ENCODE measurements at regions of chr22 and their contacts with region 1.

Region 1: DNA sequence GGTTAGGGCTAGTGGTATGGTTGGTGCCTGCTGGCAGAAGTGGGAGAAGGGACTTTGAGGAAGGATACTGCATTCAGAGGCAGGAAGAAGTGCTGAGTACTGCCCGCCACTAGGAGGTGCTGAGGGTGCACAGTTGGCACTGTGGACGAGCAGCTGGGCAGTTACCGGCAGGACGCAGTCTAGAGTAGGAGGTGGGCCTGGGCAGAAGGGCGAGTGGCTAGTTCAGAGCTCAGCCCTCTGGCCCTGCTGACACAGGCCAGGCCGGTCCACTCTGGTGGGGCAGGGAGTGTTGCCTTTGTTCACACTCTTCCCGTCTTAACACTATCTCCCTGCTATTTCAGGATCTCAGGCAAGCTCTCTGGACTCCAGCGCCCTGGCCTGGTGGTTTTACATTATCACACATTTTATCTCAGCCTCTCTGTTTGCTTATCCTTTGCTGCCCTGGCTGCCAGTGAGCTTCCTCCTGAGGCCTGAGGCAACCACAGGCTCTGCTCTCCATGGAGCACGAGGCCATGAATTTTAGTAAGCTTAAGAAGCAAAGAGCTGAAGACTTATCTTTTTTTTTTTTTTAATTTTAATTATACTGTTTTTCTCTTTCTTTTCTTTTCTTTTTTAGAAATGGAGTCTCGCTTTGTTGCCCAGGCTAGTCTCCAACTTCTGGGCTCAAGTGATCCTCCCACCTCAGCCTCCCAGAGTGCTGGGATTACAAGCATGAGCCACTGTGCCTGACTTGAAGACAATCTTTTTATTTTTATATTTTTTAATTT is 26.9 kb downstream of the SNAP29 start:
- DNase-seq: peak; percentile 75
- H3K4me3 ChIP-seq: peak overlapping the region in 1 of 3 experiments; percentile 22
- H3K27ac ChIP-seq: peak overlapping the region; percentile 42
- H3K4me1 ChIP-seq: peaks cover 15% of the 10 kb centered on the region
- H3K27me3 ChIP-seq: no peaks in the 10 kb centered on the region
- CTCF ChIP-seq: peak; percentile 97 to 99

Region 2: DNA sequence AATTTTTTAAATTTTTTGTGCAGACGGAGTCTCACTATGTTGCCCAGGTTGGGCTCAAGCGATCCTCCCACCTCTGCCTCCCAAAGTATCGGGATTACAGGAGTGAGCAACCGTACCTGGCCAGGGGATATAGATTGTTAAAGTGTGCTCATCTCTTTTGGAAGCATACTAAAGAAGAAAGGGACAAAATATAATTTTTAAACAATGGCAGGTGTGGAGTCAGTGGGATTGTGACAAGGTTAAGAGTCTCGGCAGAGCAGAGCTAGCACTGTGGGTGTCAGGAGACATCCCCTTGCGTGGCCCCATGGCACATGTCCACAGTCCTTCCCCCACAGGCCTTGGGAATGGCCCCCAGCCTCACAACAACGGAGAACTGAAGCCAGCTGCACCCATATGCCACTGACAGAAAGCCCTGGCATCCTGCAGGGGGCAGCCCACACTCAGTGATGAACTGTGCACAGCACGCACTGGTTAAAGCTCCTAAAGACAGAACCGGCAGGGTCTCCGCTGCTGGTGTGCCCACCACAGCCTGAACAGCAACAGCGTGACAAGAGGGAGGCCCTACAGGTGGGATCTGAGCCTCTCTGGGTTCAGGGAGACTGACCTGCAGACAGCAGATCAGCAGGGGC is 81.9 kb before region 1 on chr22:
- CTCF ChIA-PET with region 1: interaction called, 3 read pairs
- dilution Hi-C with region 1: no loop called
- in situ Hi-C with region 1: no loop called
- intact Hi-C with region 1: loop called (anchors 1 kb)
- DNase-seq: no peak
- H3K4me3 ChIP-seq: no peak overlapping the region
- H3K27ac ChIP-seq: no peak overlapping the region
- H3K4me1 ChIP-seq: no peaks in the 10 kb centered on the region
- H3K27me3 ChIP-seq: no peaks in the 10 kb centered on the region
- CTCF ChIP-seq: peak; percentile 47 to 60

Region 3: GRCh38 chr22:20867179-20868024 is 18.3 kb before region 1 on chr22:
- CTCF ChIA-PET with region 1: no interaction called
- dilution Hi-C with region 1: no loop called
- in situ Hi-C with region 1: no loop called
- intact Hi-C with region 1: no loop called
- DNase-seq: no peak
- H3K4me3 ChIP-seq: no peak overlapping the region
- H3K27ac ChIP-seq: no peak overlapping the region
- H3K4me1 ChIP-seq: peaks cover 4% of the 10 kb centered on the region
- H3K27me3 ChIP-seq: no peaks in the 10 kb centered on the region
- CTCF ChIP-seq: no peak

Region 4: DNA sequence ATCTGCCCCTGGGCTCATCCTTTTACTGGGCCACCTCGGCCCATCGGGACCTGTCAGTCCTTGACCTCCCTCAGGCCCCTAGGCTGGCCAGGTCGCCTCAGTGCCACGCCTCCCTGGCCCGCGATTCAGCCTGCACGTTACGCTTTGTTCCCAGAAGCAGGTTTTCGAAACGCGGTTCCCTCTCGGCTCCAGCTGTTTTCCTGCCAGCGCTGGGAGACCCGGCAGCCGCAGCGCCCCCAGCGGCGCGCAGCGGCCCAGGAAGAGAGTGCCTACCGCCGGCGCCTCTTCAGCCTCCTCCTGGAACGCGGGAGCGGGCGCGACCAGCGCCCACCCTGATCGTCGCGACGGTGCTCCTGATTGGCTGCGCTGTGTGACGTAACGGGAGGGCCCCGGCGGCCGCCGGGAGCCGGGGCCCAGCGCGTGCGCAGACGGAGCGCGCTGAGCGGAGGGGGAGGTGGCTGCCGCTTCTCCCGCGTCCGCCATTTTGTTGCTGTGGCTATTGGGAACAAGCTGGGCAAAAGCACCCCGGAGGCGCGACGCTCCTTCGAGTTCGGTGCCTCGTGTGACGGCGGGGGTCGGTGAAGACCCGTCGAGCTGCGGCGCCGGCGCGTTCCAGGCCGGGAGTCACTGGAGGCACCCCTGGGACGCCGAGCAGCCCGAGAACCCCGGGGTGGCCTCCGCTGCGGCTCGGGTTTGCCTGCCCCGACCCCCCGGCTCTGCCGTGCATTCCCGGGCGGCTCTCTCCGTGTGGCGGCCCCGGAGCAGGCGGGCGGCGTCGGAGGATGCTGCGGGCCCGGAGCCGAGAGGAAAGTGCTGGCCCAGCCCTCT is 31.5 kb after region 1 on chr22 and contains the start of gene CRKL:
- CTCF ChIA-PET with region 1: interaction called, 10 read pairs
- dilution Hi-C with region 1: no loop called
- in situ Hi-C with region 1: no loop called
- intact Hi-C with region 1: loop called (anchors 1 kb)
- DNase-seq: peak; percentile 98
- H3K4me3 ChIP-seq: peak within 1 kb of the TSS; percentile 90 to 98 (median 92)
- H3K27ac ChIP-seq: peak within 1 kb of the TSS; percentile 82
- H3K4me1 ChIP-seq: peaks cover 19% of the 10 kb centered on the region
- H3K27me3 ChIP-seq: no peaks in the 10 kb centered on the region
- CTCF ChIP-seq: peak; percentile 78 to 95
- total RNA-seq, gene CRKL: 75.0 to 80.3 TPM

Region 5: DNA sequence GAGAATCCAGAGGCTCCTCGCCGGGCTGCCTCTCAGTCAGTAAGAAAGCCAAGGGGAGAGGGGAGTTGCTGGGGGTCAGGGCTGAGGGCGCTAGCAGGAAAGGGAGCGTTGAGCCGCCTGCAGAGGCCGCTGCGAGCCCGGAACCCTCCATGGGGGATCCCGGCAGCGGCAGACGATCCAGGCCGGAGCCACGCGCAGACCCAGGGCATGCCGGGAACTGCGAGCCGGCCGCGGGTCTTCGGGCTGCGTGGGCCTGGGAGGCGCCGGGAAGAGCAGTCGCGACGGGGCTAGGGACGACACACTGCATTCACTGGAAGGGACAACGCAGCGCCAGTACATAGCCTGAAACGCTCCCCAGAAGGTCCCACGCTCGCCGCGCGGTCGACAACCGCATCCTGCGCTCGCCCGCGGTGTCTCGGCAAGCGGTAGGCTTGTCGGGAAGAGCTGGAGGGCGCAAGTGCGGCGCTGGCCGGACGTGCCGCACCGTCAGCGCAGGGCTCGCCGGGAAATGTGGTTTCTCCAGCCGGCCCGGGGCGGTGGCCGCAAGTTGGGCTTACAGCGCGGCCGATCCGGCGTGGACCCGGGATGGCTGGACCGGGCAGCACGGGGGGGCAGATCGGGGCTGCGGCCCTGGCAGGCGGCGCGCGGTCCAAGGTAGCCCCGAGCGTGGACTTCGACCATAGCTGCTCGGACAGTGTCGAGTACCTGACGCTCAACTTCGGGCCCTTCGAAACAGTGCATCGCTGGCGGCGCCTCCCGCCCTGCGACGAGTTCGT is 96.2 kb after region 1 on chr22 and contains the start of gene LZTR1:
- CTCF ChIA-PET with region 1: no interaction called
- dilution Hi-C with region 1: loop called (anchors 5 kb)
- in situ Hi-C with region 1: no loop called
- intact Hi-C with region 1: loop called (anchors 1 kb)
- DNase-seq: peak; percentile 83
- H3K4me3 ChIP-seq: peak within 1 kb of the TSS; percentile 63 to 94 (median 83)
- H3K27ac ChIP-seq: peak within 1 kb of the TSS; percentile 78
- H3K4me1 ChIP-seq: peaks cover 33% of the 10 kb centered on the region
- H3K27me3 ChIP-seq: no peaks in the 10 kb centered on the region
- CTCF ChIP-seq: peak; percentile 32 to 59
- total RNA-seq, gene LZTR1: 52.8 to 59.4 TPM

Region 6: DNA sequence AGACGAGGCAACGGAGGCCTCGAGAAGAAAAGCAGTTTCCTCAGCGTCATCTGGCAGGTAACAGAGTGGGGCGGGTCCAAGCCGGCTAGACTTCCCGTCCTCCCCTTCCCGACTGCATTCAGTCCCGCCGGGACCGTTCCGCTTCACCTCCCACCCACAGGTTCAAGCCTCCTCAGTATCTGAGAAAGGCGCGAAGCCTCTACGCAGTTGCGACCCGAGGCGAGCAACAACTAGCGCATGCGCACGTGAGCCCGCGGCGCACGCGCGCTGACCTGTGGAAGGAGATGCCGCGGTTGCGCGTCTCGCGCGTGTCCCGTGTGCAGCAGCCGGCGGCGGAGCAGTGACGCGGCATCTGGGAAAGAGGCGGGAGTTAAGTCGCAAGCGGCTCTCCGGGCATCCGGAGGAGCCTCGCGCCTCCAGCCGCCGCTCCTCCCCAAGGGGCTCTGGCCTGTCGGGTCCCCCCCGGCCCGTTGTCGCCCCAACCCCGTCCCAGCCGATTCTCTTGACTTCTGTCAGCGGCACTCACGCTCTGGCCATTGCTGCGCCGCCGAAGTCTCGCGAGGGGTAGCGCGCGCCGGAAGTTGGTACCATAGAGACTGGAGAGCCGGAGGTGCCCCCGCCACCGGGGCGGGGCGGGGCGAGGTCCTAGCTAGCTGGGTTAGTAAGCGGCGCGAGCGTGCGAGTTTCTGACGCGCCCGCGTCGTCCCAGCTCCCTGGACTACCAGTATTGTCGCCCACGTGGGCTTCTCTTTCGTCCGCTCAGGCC is 116.0 kb after region 1 on chr22 and contains the start of gene THAP7:
- CTCF ChIA-PET with region 1: interaction called, 5 read pairs
- dilution Hi-C with region 1: no loop called
- in situ Hi-C with region 1: no loop called
- intact Hi-C with region 1: loop called (anchors 1 kb)
- DNase-seq: peak; percentile 94
- H3K4me3 ChIP-seq: peak within 1 kb of the TSS; percentile 54 to 95 (median 68)
- H3K27ac ChIP-seq: peak within 1 kb of the TSS; percentile 94
- H3K4me1 ChIP-seq: peaks cover 29% of the 10 kb centered on the region
- H3K27me3 ChIP-seq: no peaks in the 10 kb centered on the region
- CTCF ChIP-seq: no peak
- total RNA-seq, gene THAP7: 17.3 to 23.6 TPM

Measured in mammary epithelial cell (primary cell).